ENCODE measurements at regions of chr3 and their contacts with region 1.

Region 1: DNA sequence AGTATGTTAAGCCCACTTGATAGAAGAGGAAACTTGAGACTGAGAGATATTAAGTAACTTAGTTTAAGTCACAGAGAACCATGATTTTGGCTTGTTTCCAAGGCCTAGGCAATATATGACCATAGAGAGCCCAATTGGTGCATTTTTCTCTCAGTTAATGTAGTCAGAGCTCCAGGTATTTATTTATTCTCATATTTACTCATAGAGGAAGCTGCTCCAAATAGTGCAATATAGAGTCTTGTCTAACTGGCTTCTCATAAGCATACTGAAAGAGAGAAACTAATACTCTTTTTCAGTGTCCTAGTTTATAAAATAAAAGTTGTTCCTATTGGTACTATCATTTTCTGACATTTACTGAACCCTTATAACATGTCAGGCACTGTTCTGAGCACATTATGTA is 15.2 kb downstream of the TRNT1 start:
- DNase-seq: no peak
- ATAC-seq: no peak
- H3K4me3 Mint-ChIP-seq: no peak overlapping the region
- H3K27ac Mint-ChIP-seq: no peak overlapping the region
- H3K4me1 Mint-ChIP-seq: no peaks in the 10 kb centered on the region
- H3K27me3 Mint-ChIP-seq: no peaks in the 10 kb centered on the region
- CTCF ChIP-seq: no peak

Region 2: DNA sequence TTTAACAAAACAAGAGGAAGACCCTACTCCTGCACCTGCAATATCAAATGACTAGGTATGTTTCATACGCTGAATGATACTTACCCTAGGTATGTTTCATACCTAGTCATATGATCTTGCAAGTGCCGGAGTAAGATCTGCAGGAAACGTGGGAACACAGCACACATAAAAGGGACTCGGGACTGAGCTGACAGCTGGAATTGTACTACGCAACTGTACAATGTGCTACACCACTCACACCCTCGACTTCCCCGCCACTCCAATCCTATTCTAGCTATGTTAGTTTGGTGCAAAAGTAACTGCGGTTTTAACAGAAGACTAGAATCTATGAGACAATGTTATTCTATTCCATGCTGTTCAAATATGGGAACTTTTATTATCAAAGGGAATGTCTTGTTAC is 15.5 kb after region 1 on chr3:
- CTCF ChIA-PET with region 1: no interaction called
- POLR2A ChIA-PET with region 1: no interaction called
- intact Hi-C with region 1: loop called (anchors 2 kb)
- DNase-seq: no peak
- ATAC-seq: no peak
- H3K4me3 Mint-ChIP-seq: no peak overlapping the region
- H3K27ac Mint-ChIP-seq: no peak overlapping the region
- H3K4me1 Mint-ChIP-seq: no peaks in the 10 kb centered on the region
- H3K27me3 Mint-ChIP-seq: no peaks in the 10 kb centered on the region
- CTCF ChIP-seq: no peak

Measured in activated B cell treated with CpG ODN at 0.5 μM for 24 hours (primary cell).